Naive thymus-derived CD8-positive, alpha-beta T cell (primary cell): ENCODE measurements at regions of chr15 and their contacts with region 1.

Region 1: DNA sequence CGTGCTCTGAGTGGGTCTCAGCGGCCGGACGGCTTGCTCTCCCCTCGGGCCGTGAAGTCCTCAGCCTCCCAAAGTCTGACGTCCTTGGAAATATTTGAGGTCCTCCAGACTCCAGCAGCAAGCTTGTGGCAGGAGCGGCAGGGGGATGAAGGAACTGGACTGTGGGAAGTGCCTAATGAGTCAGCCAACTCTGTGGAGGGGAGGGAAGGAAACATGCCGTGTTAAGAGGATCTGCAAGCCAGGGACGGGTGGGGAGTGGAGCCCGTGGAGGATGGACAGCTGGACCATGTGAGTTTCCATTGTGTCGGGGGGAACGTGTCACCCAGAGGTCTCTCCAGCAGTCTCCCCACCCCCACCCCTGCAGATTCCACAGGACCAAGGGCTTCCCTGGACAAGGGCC is 39.4 kb upstream of the IDH2 start:
- DNase-seq: no peak
- ATAC-seq: no peak
- H3K4me3 Mint-ChIP-seq: peak overlapping the region in 3 of 10 donors; percentile 34 to 55 (median 43)
- H3K27ac Mint-ChIP-seq: peak overlapping the region in 4 of 10 donors; percentile 5 to 63 (median 28)
- H3K4me1 Mint-ChIP-seq: peaks cover 4 to 28% (median 22%) of the 10 kb centered on the region in 4 donors
- H3K27me3 Mint-ChIP-seq: peaks cover 0 to 1% (median 0%) of the 10 kb centered on the region in 5 donors

Region 2: GRCh38 chr15:89917442-89918069 is 224.1 kb before region 1 on chr15:
- POLR2A ChIA-PET with region 1: interaction called, 10 read pairs
- DNase-seq: no peak
- ATAC-seq: no peak
- H3K4me3 Mint-ChIP-seq: no peak overlapping the region
- H3K27ac Mint-ChIP-seq: no peak overlapping the region
- H3K4me1 Mint-ChIP-seq: peaks cover 0 to 7% (median 2%) of the 10 kb centered on the region in 4 donors
- H3K27me3 Mint-ChIP-seq: peaks cover 8 to 24% (median 21%) of the 10 kb centered on the region in 5 donors